Naive thymus-derived CD4-positive, alpha-beta T cell (primary cell): ENCODE measurements at regions of chr6 and their contacts with region 1.

Region 1: GRCh38 chr6:156167625-156168071 is 609.5 kb upstream of the ARID1B start:
- DNase-seq: peak in 1 of 9 donors; percentile 8
- ATAC-seq: no peak
- H3K4me3 ChIP-seq: peak overlapping the region; percentile 26
- H3K4me3 Mint-ChIP-seq: peak overlapping the region; percentile 68 to 87 (median 80)
- H3K27ac ChIP-seq: peak overlapping the region; percentile 16
- H3K27ac Mint-ChIP-seq: peak overlapping the region; percentile 10 to 89 (median 81)
- H3K4me1 ChIP-seq: peaks cover 0 to 7% of the 10 kb centered on the region in 2 donors
- H3K4me1 Mint-ChIP-seq: peaks cover 8 to 65% (median 38%) of the 10 kb centered on the region in 7 donors
- H3K27me3 ChIP-seq: no peaks in the 10 kb centered on the region
- H3K27me3 Mint-ChIP-seq: no peaks in the 10 kb centered on the region

Region 2: DNA sequence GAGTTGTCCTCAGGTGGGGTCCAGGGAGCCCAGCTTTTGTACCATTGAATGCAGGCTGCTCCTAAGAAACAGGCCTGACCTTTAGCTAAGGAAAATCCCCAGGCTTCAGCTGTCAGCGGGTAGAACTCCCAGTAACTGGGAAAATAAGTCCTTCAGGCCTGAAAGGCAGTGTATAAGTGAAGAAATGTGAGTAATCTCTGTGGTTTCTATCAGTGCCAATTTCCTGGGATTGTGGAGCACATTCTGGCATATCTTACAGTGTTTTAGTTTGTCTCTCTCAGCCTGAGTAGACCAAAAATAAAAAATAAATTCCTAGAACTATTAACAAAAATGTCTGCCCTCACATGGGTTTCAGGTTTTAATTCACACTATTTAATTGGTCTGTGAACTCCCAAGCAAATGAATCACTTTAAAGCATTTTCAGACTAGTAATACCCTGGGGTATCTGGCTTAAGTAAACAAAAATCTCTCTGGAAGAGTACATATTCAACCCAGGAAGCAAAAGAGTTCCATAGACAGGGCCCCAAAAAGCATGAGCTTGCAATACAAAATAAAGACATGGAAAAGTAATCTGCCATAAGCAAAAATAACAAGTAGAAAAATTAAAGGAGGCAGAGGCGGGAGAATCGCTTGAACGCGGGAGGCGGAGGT is 145.8 kb before region 1 on chr6:
- CTCF ChIA-PET with region 1: no interaction called
- POLR2A ChIA-PET with region 1: no interaction called
- intact Hi-C with region 1: no loop called
- DNase-seq: no peak
- ATAC-seq: no peak
- H3K4me3 ChIP-seq: no peak overlapping the region
- H3K4me3 Mint-ChIP-seq: no peak overlapping the region
- H3K27ac ChIP-seq: no peak overlapping the region
- H3K27ac Mint-ChIP-seq: no peak overlapping the region
- H3K4me1 ChIP-seq: no peaks in the 10 kb centered on the region
- H3K4me1 Mint-ChIP-seq: no peaks in the 10 kb centered on the region
- H3K27me3 ChIP-seq: no peaks in the 10 kb centered on the region
- H3K27me3 Mint-ChIP-seq: no peaks in the 10 kb centered on the region

Region 3: DNA sequence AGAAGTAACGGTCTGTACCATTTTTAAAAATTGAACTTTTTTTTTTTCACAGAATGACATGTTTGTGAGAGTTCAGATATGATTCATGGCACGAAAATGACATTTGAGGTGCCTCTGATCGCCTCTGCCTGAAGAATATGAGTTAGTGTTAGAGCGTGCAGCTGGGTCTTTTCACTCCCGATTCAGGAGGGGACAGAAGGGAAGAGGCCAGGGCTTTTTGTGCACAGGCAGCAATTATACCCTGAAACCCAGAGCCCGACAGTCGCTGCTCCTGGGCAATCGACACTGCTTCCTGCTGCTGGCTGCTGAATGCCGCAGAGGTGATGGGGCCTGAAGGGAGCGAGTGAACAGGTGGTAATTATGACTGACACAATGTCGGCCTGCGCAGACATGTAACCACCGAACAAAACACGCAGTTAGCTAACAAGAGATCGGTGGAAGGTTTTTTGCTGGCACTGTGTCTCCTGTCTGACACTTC is 60.0 kb before region 1 on chr6:
- CTCF ChIA-PET with region 1: no interaction called
- POLR2A ChIA-PET with region 1: no interaction called
- intact Hi-C with region 1: no loop called
- DNase-seq: no peak
- ATAC-seq: no peak
- H3K4me3 ChIP-seq: no peak overlapping the region
- H3K4me3 Mint-ChIP-seq: no peak overlapping the region
- H3K27ac ChIP-seq: no peak overlapping the region
- H3K27ac Mint-ChIP-seq: no peak overlapping the region
- H3K4me1 ChIP-seq: no peaks in the 10 kb centered on the region
- H3K4me1 Mint-ChIP-seq: no peaks in the 10 kb centered on the region
- H3K27me3 ChIP-seq: no peaks in the 10 kb centered on the region
- H3K27me3 Mint-ChIP-seq: no peaks in the 10 kb centered on the region

Region 4: DNA sequence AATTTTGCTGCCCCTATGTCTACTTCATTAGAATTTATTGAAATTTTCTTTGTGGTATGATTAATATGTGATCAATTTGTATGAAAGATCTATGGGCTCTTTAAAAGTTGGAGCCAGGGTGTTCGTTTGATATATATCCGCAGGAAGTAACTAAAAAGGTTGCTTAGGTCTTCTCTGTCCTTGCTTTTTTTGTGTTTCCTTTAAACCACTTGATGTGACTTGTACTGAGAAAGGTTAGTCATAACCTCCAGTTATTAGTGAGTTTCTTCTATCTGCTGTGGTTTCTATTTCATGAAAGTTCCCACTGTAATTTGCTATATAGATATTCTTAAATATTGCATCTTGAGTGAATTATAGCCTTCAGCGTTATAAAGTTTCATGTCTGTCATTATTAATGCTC is 24.2 kb after region 1 on chr6:
- CTCF ChIA-PET with region 1: no interaction called
- POLR2A ChIA-PET with region 1: interaction called, 5 read pairs
- intact Hi-C with region 1: loop called in 1 of 2 experiments (anchors 2 kb)
- DNase-seq: peak in 4 of 9 donors; percentile 13 to 39 (median 34)
- ATAC-seq: no peak
- H3K4me3 ChIP-seq: no peak overlapping the region
- H3K4me3 Mint-ChIP-seq: peak overlapping the region in 7 of 10 donors; percentile 1 to 63 (median 33)
- H3K27ac ChIP-seq: no peak overlapping the region
- H3K27ac Mint-ChIP-seq: peak overlapping the region in 6 of 9 donors; percentile 19 to 87 (median 42)
- H3K4me1 ChIP-seq: peaks cover 0 to 2% of the 10 kb centered on the region in 2 donors
- H3K4me1 Mint-ChIP-seq: peaks cover 1 to 54% (median 32%) of the 10 kb centered on the region in 7 donors
- H3K27me3 ChIP-seq: no peaks in the 10 kb centered on the region
- H3K27me3 Mint-ChIP-seq: no peaks in the 10 kb centered on the region

Region 5: DNA sequence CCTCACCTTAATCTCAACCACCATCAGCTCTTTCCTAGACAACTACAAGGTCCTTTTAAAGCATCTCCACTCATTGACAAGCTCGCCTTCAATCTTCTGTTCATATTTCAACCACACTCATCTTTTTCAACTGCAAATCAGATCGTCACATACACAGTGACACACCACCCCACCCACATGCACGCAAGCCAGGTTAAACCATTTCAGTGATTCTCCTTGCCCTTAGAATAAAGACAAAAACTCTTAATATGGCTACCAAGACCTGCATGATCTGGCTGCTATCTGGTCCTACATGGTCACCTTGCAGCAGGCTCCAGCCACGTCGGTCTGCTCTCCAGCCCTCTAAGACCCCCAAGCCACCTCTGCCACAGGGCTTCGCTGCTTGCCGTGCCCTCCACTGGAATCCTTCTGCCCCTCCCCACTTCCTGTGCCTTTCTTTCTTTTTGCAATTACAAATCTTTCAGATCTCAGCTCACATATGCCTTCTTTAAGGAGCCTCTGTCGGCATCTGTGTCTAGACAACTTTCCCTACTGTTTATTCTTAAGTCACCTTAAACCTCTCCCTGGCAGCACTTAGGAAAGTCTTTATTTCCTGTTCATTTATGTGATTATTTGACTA is 102.2 kb after region 1 on chr6:
- CTCF ChIA-PET with region 1: no interaction called
- POLR2A ChIA-PET with region 1: no interaction called
- intact Hi-C with region 1: loop called in 1 of 2 experiments (anchors 5 kb)
- DNase-seq: peak in 7 of 9 donors; percentile 29 to 67 (median 56)
- ATAC-seq: peak; percentile 69
- H3K4me3 ChIP-seq: peak overlapping the region; percentile 53
- H3K4me3 Mint-ChIP-seq: peak overlapping the region; percentile 2 to 87 (median 78)
- H3K27ac ChIP-seq: peak overlapping the region; percentile 55
- H3K27ac Mint-ChIP-seq: peak overlapping the region; percentile 0 to 92 (median 77)
- H3K4me1 ChIP-seq: peaks cover 0 to 20% of the 10 kb centered on the region in 2 donors
- H3K4me1 Mint-ChIP-seq: peaks cover 10 to 41% (median 32%) of the 10 kb centered on the region in 7 donors
- H3K27me3 ChIP-seq: no peaks in the 10 kb centered on the region
- H3K27me3 Mint-ChIP-seq: no peaks in the 10 kb centered on the region